ENCODE measurements at regions of chr5 and their contacts with region 1.

Region 1: DNA sequence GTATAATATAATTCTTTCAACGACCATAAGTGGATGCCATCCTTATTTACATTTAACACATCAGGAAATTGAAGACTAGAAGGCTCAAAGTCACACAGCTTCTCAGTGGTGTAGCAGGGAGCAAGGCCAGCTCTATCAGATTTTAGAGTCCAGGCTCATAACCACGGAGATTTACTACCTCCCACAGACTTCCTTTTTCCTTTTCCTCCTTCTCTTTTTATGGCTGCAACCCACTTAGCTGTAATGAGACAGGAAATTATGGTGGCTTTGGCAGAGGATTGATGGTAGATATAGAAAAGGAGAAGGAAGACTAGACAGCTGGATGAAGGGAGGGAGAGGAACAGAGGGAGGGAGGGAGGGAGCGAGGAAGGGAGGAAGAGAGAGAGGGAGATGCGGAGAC is 47.4 kb downstream of the SPEF2 start:
- DNase-seq: no peak
- H3K4me3 Mint-ChIP-seq: no peak overlapping the region
- H3K27ac Mint-ChIP-seq: no peak overlapping the region
- H3K4me1 Mint-ChIP-seq: peaks cover 37% of the 10 kb centered on the region
- H3K27me3 Mint-ChIP-seq: no peaks in the 10 kb centered on the region

Region 2: DNA sequence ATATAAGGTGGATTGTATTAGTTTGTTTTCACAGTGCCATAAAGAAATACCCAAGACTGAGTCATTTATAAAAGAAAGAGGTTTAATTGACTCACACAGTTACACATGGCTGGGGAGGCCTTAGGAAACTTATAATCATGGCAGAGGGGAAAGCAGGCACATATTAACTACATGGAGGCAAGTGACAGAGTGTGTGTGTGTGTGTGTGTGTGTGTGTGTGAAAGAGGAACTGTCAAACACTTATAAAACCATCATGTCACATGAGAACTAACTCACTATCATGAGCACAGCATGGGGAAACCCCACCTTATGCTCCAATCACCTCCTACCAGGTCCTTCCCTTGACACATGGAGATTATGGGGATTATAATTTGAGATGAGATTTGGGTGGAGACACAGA is 71.2 kb after region 1 on chr5:
- CTCF ChIA-PET with region 1: no interaction called
- POLR2A ChIA-PET with region 1: no interaction called
- intact Hi-C with region 1: loop called (anchors 1 kb)
- DNase-seq: peak; percentile 68
- H3K4me3 Mint-ChIP-seq: no peak overlapping the region
- H3K27ac Mint-ChIP-seq: peak overlapping the region; percentile 77
- H3K4me1 Mint-ChIP-seq: peaks cover 47% of the 10 kb centered on the region
- H3K27me3 Mint-ChIP-seq: no peaks in the 10 kb centered on the region